Sigmoid colon (tissue), 7 donors: ENCODE measurements at regions of chr19 and their contacts with region 1.

Region 1: DNA sequence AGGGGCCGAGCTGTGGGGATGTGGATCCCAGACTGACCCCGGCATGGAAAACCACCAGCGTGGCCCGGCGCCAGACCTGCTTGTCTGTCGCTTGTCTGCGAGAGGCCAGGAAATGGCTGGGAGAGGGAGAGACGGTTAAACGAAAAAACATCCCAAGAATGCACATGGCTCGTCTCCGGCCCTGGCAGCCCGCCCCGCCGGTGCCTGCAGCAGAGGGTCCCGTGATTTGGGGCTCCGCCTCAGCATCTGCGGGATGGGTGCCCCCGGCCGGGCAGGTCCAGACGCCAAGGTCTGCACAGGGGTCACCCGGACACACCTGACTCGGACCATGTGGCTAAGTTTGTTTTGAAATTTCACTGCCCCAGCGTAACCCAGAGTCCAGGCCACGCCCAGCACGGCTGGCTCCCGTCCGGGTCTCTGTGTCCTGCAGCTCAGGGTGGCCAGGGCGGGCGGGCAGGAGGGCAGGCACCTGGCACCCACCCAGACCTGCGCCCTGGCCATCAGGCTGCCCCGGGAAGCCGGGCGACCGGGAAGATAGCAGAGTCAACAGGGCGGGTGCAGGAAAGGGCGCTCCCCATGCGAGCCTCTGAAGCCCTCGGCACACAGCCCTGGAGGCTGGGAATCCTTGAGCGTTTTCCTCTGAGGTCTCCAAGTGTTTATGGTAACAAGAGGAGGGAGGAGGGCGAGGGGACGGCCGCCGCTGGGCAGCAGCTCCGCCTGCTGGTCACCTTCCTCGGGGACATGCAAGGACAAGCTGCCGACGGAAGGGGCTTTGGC is 103.2 kb downstream of the GADD45B start:
- DNase-seq: peak; percentile 96
- H3K4me3 ChIP-seq: peak overlapping the region; percentile 34 to 55 (median 52)
- H3K27ac ChIP-seq: peak overlapping the region; percentile 85 to 95 (median 86)
- H3K4me1 ChIP-seq: peaks cover 3 to 56% (median 23%) of the 10 kb centered on the region in 4 donors
- H3K27me3 ChIP-seq: no peaks in the 10 kb centered on the region
- CTCF ChIP-seq: peak; percentile 93 to 98 (median 97)
- EP300 ChIP-seq: peak in 3 of 4 donors; percentile 52 to 69 (median 68)
- POLR2A ChIP-seq: peak; percentile 11 to 36

Region 2: DNA sequence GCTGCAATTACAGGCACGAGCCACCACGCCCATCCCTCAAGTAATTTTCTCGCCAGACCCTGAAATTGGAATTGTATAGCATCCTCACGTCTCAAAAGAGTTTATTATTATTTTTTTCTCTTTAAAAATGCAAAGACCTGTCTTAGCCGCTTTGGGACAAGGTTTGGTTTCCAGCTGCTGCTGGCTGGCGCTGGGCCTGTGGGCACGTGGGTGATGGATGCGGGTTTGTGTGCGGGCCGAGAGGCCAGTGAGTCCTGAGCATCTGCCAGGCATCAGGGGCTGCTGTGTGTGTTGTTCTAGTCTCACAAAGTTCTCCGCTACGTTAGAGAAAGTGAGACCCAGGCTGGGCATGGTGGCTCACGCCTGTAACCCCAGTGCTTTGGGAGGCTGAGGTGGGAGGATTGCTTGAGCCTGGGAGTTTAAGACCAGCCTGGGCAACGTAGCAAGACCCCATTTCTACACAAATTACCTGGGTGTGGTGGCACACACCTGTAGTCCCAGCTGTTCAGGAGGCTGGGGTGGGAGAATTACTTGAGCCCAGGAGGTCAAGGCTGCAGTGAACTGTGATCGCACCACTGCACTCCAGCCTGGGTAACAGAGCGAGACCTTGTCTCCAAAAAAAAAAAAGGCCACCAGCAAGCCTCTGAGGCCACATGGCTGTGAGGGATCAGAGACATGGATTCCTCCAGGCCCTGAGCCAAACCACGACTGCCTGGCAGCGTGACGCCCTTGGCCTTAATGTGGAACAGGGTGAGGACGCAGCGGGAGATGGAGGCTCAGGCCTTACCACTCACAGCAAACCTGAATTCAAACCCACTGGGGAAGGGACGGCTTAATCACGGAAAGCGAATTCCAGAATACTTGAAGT is 223.7 kb before region 1 on chr19:
- intact Hi-C with region 1: no loop called
- DNase-seq: no peak
- H3K4me3 ChIP-seq: no peak overlapping the region
- H3K27ac ChIP-seq: no peak overlapping the region
- H3K4me1 ChIP-seq: no peaks in the 10 kb centered on the region
- H3K27me3 ChIP-seq: peaks cover 3 to 8% (median 5%) of the 10 kb centered on the region in 3 donors
- CTCF ChIP-seq: no peak
- EP300 ChIP-seq: no peak
- POLR2A ChIP-seq: no peak

Region 3: GRCh38 chr19:2475702-2476450 is 103.2 kb before region 1 on chr19 and contains the start of gene GADD45B:
- intact Hi-C with region 1: loop called (anchors 1 kb)
- DNase-seq: peak; percentile 99
- H3K4me3 ChIP-seq: peak within 1 kb of the TSS; percentile 71 to 97 (median 94)
- H3K27ac ChIP-seq: peak within 1 kb of the TSS; percentile 91 to 96 (median 94)
- H3K4me1 ChIP-seq: peaks cover 0 to 35% (median 20%) of the 10 kb centered on the region in 4 donors
- H3K27me3 ChIP-seq: no peaks in the 10 kb centered on the region
- CTCF ChIP-seq: no peak
- EP300 ChIP-seq: peak in 2 of 4 donors; percentile 42 to 73
- POLR2A ChIP-seq: peak; percentile 100
- total RNA-seq, gene GADD45B: 82.0 to 708 (median 108) TPM

Region 4: DNA sequence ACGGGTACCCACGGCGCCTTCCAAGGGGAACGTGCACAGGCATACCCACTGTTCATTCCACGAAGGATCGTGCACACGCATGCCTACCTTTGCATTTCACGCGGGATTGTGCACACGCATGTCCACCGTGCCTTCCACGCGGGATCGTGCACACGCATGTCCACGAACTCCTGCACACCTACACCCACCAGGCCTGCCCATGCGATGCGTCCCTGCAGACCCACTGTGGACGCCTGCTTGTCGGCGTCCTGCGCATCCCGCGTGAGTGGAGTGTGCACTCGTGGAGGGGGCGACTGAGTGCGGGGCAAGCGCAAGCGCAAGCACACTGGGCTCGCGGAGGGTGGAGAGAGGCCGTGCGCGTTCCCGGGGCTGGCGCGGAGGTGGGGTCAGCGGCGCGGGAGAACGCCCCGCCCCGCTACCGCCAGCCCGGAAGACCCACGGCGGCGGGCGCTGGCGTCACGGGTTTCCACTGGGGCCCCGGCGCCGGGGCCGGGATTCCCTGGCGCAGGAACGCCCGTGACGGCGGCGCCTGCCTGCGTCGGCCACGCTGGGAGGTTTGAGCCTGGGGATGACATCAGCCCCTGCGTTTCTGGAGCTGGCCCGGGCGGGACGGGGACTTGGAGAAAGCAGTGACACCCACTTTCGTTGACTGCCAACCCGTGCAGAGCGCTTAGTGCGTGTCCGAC is 84.5 kb before region 1 on chr19:
- intact Hi-C with region 1: loop called (anchors 1 kb)
- DNase-seq: peak; percentile 94
- H3K4me3 ChIP-seq: peak overlapping the region; percentile 34 to 62 (median 52)
- H3K27ac ChIP-seq: peak overlapping the region; percentile 77 to 94 (median 84)
- H3K4me1 ChIP-seq: peaks cover 0 to 38% (median 27%) of the 10 kb centered on the region in 4 donors
- H3K27me3 ChIP-seq: no peaks in the 10 kb centered on the region
- CTCF ChIP-seq: no peak
- EP300 ChIP-seq: peak in 2 of 4 donors; percentile 38 to 59
- POLR2A ChIP-seq: no peak

Region 5: DNA sequence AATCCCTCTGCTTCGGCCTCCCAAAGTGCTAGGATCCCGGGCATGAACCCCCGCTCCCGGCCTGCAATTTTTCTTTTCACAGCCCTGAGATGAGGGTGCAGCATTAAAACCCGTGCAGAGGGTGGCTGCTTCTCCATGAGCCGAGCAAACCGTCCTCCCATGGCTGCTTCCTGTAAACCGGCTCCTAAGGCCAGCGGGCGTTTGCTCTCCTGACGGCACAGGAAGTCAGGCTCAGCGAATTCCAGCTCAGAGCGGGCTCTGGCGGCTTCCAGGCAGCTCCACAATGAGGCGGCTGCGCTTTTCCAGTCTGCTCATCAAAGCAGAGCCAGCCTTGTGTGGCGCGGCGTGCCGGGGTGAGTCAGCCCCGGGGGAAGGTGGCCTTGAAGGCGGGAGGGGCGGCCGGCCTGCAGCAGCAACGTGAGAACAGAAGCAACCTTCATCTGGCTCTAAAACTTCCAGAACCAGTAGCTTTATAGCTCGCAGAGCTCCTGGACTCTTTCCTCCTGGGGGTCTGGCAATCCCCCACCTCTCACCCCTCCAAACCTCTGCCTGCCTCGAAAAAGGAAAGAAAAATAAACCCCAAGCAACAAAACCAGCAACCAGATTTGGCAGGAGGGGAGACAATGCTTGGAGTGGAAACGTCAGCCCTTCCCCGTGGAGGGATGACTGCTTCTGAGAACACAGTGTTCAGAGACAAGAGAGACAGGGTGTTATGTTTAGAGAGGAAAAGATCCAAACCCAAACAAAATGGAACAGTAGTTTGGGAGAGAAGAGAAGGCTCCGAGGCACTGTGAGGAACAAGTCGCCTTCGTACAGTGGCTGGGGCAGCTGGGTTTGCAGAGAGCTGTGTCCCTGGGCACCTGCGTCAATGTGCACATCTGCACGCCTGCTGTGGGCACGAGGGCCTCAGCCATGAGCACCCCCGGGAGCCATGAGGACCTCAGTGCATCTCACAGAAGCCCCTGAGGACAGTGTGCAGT is 35.3 kb before region 1 on chr19:
- intact Hi-C with region 1: loop called (anchors 2 kb)
- DNase-seq: peak; percentile 99
- H3K4me3 ChIP-seq: peak overlapping the region; percentile 10 to 36 (median 28)
- H3K27ac ChIP-seq: peak overlapping the region; percentile 89 to 98 (median 94)
- H3K4me1 ChIP-seq: peaks cover 0 to 73% (median 69%) of the 10 kb centered on the region in 4 donors
- H3K27me3 ChIP-seq: no peaks in the 10 kb centered on the region
- CTCF ChIP-seq: no peak
- EP300 ChIP-seq: peak; percentile 89 to 98 (median 93)
- POLR2A ChIP-seq: peak; percentile 43 to 46

Region 6: DNA sequence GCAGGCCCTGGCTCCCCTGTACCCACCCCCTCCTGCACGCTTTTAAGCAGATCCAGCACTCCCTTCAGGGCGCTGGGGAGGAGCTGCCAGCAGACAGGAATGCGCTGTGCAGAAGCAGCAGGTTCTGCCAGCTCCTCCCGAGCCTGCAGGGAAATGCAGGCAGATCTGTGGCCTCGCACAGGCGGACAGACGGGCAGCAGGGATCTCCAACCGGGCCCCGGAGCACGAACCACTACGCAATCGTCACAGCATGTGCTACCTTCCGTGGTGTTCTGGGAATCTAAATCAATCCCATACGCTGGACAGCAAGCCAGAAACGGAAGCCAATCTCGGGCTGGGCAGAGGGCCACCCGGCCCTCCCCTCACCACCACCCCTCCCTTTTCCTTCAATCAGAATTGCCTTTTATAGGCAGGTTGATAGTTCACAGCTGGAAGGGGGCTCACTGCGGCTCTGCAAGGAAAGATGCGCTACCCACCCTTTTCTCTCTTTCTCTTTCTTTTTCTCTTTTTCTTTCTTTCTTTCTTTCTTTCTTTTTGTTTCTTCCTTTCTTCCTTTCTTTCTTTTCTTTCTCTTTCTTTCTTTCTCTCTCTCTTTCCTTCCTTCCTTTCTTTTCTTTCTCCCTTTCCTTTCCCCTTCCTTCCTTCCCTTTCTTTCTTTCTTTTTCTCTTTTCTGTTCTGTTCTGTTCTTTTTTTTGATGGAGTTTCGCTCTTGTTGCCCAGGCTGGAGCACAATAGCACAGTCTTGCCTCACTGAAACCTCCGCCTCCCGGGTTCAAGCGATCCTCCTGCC is 23.5 kb after region 1 on chr19:
- intact Hi-C with region 1: loop called (anchors 2 kb)
- DNase-seq: peak; percentile 98
- H3K4me3 ChIP-seq: peak overlapping the region; percentile 8 to 42 (median 32)
- H3K27ac ChIP-seq: peak overlapping the region; percentile 85 to 94 (median 93)
- H3K4me1 ChIP-seq: peaks cover 0 to 55% (median 47%) of the 10 kb centered on the region in 4 donors
- H3K27me3 ChIP-seq: no peaks in the 10 kb centered on the region
- CTCF ChIP-seq: peak in 1 of 4 experiments; percentile 18
- EP300 ChIP-seq: peak; percentile 76 to 99 (median 88)
- POLR2A ChIP-seq: peak in 1 of 2 donors; percentile 59

Region 7: GRCh38 chr19:2610637-2611482 is 31.8 kb after region 1 on chr19:
- intact Hi-C with region 1: loop called (anchors 1 kb)
- DNase-seq: peak; percentile 96
- H3K4me3 ChIP-seq: peak overlapping the region; percentile 15 to 50 (median 46)
- H3K27ac ChIP-seq: peak overlapping the region; percentile 87 to 94 (median 88)
- H3K4me1 ChIP-seq: peaks cover 0 to 28% (median 12%) of the 10 kb centered on the region in 4 donors
- H3K27me3 ChIP-seq: no peaks in the 10 kb centered on the region
- CTCF ChIP-seq: peak; percentile 93 to 98 (median 96)
- EP300 ChIP-seq: peak in 2 of 4 donors; percentile 54 to 74
- POLR2A ChIP-seq: no peak

Region 8: DNA sequence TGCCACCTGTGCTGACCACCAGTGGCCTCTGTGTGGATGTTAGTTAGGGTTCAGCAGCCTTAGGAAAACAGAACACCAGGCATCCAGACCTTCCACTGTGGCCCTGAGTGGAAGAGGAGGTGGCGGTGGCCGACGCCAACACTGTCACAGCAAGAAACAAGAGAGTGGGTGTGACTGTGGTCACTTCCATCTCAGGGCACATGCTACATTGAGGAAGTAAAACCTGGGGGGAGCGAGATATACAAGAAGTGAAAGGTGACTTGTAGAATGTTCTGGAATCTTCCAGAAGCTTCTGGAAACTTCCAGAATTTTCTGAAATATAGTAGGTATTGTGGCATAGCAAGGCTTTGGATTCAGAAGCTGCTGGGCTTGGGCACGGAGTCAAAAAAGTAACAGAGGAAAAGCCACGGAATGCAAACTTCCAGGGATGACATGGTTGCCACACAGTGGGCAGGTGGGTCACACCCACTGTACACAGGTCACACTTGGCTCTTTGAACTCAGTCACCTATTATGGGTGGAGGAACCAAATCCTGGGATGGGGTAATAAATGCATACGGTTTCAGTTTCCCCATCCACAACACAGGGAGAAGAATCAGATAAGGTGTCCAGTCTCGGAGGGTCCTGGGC is 99.1 kb after region 1 on chr19:
- intact Hi-C with region 1: no loop called
- DNase-seq: no peak
- H3K4me3 ChIP-seq: no peak overlapping the region
- H3K27ac ChIP-seq: no peak overlapping the region
- H3K4me1 ChIP-seq: peaks cover 0 to 15% (median 9%) of the 10 kb centered on the region in 4 donors
- H3K27me3 ChIP-seq: no peaks in the 10 kb centered on the region
- CTCF ChIP-seq: no peak
- EP300 ChIP-seq: no peak
- POLR2A ChIP-seq: no peak